ENCODE measurements at regions of chr3 and their contacts with region 1.

Region 1: DNA sequence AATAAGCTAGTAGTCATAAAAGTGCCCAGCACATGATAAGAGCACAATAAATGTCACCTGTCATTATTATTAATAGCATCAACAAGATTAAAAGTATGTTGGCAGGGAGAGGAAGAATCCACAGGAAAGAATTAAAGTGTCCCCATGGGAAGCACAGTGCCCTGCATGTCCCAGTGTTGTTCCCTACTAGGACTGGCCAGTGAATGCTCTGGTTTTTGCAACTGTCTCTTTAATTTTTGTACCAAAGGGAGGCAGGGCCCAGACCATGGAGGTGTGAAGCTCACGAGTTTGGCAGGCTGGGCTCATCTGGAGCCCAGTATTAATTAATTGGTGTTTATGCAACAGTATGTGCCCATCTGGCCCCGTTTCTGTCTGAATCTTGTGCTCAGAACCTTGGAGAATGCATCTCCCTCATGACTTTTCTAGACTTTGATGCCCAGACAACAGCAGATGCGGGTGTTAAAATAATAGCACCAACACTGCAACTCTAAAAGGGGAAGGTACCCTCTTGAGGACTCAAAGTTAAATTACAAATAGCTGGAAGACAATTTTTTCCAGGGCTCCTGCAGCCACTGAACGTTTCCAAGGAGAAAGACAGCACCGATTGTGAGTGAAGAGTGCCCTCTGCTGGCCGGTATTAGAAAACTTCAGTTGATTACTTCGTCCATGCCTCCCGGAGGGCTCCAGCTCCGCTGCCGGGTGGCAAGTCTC is 71.9 kb upstream of the SPATA12 start:
- DNase-seq: peak; percentile 71
- H3K4me3 ChIP-seq: no peak overlapping the region; a peak in 1 of 4 replicates
- H3K27ac ChIP-seq: no peak overlapping the region
- H3K4me1 ChIP-seq: peaks cover 4 to 20% of the 10 kb centered on the region in 2 experiments; a peak in 2 of 4 replicates
- H3K27me3 ChIP-seq: no peaks in the 10 kb centered on the region
- CTCF ChIP-seq: peak; percentile 84
- EP300 ChIP-seq: no peak
- RAD21 ChIP-seq: peak; percentile 99

Region 2: DNA sequence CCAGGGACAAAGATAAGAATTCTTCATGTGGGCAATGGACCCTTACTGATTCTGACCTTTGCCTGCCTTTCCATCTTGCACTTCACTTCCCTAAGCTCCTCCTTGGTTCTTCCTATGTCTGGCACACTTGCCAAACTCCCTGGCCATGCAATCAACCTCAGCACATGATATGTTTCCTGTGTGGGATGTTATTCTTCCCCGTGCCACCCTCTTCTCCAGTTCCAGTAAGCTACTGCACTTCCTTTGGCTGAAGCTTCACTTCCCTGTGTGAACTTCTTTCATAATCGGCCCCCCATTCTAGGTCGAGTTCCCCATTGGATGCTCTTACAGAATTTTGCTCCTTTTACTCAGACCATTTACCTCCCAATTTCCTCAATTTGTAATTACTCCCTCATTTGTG is 294.9 kb before region 1 on chr3:
- CTCF ChIA-PET with region 1: interaction called, 20 read pairs
- POLR2A ChIA-PET with region 1: no interaction called
- DNase-seq: no peak
- H3K4me3 ChIP-seq: no peak overlapping the region
- H3K27ac ChIP-seq: no peak overlapping the region
- H3K4me1 ChIP-seq: no peaks in the 10 kb centered on the region
- H3K27me3 ChIP-seq: no peaks in the 10 kb centered on the region
- CTCF ChIP-seq: no peak
- EP300 ChIP-seq: no peak
- RAD21 ChIP-seq: no peak

Region 3: GRCh38 chr3:56748663-56749231 is 239.9 kb before region 1 on chr3:
- CTCF ChIA-PET with region 1: interaction called, 18 read pairs
- POLR2A ChIA-PET with region 1: no interaction called
- DNase-seq: no peak
- H3K4me3 ChIP-seq: no peak overlapping the region
- H3K27ac ChIP-seq: no peak overlapping the region
- H3K4me1 ChIP-seq: peaks cover 0 to 3% of the 10 kb centered on the region in 2 experiments; a peak in 2 of 4 replicates
- H3K27me3 ChIP-seq: no peaks in the 10 kb centered on the region
- CTCF ChIP-seq: no peak
- EP300 ChIP-seq: no peak
- RAD21 ChIP-seq: no peak

Region 4: DNA sequence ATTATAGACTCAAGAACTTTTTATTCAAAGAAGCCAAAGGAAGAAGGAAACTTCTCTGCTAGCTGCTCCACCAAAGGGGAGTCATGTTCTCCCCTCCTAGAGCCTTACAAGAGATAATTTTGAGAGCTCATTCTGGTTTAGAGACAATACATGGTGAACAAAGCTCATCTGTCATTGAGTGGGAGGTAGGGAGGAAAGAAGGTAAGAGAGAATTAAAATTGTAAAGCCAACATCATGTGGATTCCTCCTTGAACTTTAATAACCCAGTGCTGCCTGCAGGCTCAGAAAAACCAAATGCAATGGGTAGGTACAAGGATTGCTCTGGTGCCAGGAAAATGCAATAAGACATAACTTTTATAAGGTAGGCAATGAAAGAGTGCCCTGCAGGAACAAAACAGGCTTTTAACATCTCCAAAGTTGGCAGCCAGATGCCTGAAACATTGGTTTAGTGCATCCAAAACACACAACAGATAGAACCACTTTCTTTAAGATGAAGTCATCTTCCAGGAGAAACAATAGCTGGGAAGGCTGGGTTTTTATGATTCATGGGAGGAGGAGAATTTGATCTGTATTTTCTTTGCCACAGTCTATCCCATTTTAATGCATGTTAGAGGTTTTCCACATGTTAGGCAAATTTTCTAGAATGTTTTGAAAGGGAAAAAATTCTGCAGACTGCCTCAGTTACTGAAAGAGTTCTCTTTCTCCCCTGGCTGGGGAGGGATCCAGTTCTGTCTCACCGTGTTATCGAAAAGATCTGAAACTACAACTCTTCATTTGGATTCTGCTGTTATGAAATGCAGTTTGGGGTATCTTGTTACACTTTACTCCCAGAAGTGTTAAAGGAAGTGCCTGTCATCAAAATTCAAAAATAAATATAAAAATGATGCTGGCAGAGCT is 175.6 kb before region 1 on chr3:
- CTCF ChIA-PET with region 1: interaction called, 17 read pairs
- POLR2A ChIA-PET with region 1: no interaction called
- DNase-seq: no peak
- H3K4me3 ChIP-seq: no peak overlapping the region
- H3K27ac ChIP-seq: peak overlapping the region in 1 of 2 experiments; percentile 23; a peak in 2 of 4 replicates
- H3K4me1 ChIP-seq: peaks cover 11% of the 10 kb centered on the region in 2 experiments; a peak in 3 of 4 replicates
- H3K27me3 ChIP-seq: no peaks in the 10 kb centered on the region
- CTCF ChIP-seq: no peak
- EP300 ChIP-seq: no peak
- RAD21 ChIP-seq: no peak

Region 5: GRCh38 chr3:56869157-56869889 is 119.3 kb before region 1 on chr3:
- CTCF ChIA-PET with region 1: interaction called, 20 read pairs
- POLR2A ChIA-PET with region 1: no interaction called
- DNase-seq: no peak
- H3K4me3 ChIP-seq: no peak overlapping the region; a peak in 1 of 4 replicates
- H3K27ac ChIP-seq: peak overlapping the region in 1 of 2 experiments; percentile 31; a peak in 1 of 4 replicates
- H3K4me1 ChIP-seq: peaks cover 0 to 16% of the 10 kb centered on the region in 2 experiments; a peak in 2 of 4 replicates
- H3K27me3 ChIP-seq: no peaks in the 10 kb centered on the region
- CTCF ChIP-seq: no peak
- EP300 ChIP-seq: no peak
- RAD21 ChIP-seq: no peak

Region 6: DNA sequence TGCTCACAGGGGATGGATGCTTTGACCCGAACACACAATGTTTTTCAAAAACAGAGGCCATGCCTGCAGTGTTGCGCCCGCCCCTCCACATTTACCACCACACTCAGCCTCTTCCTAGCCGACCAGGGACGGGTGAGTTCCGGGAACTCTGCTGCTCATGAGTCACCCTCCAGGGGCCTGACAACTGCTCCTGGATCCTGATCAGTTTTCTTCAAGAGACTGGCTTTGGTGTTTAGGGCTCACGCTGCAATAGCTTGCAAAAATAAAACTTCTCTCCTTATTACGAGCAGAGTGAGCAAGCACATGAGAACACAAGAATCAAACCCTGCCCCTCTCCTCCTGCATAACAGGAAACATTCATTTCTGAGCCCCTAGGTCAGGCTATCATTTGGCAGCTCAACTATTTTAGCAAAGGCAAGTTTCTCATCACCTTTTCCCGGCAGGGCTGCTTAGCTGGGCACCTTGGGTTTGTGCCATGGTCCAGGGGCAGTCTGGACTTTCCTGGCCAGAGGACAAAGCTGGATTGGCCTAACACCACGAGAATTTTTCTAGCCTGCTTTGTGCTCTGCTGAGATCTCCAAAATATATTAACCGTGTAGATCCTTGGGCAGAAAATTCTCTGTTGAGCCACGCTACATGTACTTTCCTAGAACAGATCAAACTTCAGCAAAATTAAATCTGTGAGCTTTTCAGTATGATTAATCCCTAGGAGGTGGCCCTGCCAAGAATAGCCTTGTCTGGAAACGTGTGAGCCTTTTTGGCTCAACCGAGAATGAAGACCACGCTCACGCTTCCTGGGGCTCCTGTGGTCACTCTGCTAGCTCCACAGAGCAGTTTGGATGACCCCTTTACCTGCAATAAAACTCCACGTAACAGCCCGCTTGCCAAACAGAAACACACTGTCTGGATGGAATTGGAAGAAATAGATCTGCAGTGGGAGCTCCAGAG is 19.2 kb after region 1 on chr3:
- CTCF ChIA-PET with region 1: interaction called, 14 read pairs
- POLR2A ChIA-PET with region 1: no interaction called
- DNase-seq: no peak
- H3K4me3 ChIP-seq: peak overlapping the region in 1 of 2 experiments; percentile 38; a peak in 2 of 4 replicates
- H3K27ac ChIP-seq: peak overlapping the region; percentile 84 to 85
- H3K4me1 ChIP-seq: peaks cover 19 to 42% of the 10 kb centered on the region in 2 experiments
- H3K27me3 ChIP-seq: no peaks in the 10 kb centered on the region
- CTCF ChIP-seq: no peak
- EP300 ChIP-seq: peak in 1 of 2 experiments; percentile 32; a peak in 1 of 4 replicates
- RAD21 ChIP-seq: no peak; the same call in 1 of the 2 replicates

Measured in SK-N-SH (cell line).